ENCODE measurements at regions of chr12 and their contacts with region 1.

Region 1: GRCh38 chr12:14257734-14258574 is 107.5 kb upstream of the ATF7IP start:
- DNase-seq: peak in 3 of 4 donors; percentile 95 to 96 (median 95)
- ATAC-seq: peak; percentile 75
- H3K4me3 ChIP-seq: no peak overlapping the region
- H3K27ac ChIP-seq: peak overlapping the region; percentile 92 to 98
- H3K4me1 ChIP-seq: peaks cover 18 to 73% of the 10 kb centered on the region in 2 donors
- H3K27me3 ChIP-seq: no peaks in the 10 kb centered on the region
- CTCF ChIP-seq: no peak

Region 2: DNA sequence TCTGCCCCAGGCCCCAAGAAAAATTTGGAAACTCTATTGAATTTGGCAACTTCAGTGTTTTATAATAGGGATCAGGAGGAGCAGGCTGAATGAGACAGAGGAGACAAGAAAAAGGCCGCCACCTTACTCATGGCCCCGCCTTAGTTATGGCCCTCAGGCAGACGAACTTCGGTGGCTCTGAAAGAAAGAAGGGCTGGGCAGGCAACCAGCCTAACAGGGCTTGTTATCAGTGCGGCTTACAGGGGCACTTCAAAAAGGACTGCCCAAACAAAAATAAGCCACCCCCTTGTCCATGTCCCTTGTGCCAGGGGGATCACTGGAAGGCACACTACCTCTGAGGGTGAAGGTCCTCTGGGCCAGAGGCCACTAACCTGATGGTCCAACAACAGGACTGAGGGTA is 38.8 kb before region 1 on chr12:
- intact Hi-C with region 1: no loop called
- DNase-seq: no peak
- ATAC-seq: no peak
- H3K4me3 ChIP-seq: no peak overlapping the region
- H3K27ac ChIP-seq: no peak overlapping the region
- H3K4me1 ChIP-seq: peaks cover 0 to 9% of the 10 kb centered on the region in 2 donors
- H3K27me3 ChIP-seq: no peaks in the 10 kb centered on the region
- CTCF ChIP-seq: no peak

Region 3: DNA sequence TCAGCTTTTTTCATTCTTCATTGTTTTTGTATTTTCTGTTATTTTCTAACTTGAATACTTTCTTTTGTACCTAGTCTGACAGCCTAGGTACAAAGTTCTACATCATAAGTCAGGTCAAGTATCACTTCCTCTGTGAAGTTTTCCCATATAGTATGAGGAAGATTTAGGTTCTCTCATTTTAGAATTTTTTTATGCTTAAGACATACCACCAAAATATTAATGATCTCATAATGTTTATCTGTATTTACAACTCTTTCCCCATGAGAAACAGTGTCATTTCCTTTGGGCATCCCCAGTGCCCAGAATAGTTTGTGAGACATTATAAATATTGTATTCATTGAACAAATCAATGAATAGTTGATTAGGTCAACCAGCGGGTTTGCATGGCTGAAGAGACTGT is 104.4 kb after region 1 on chr12:
- intact Hi-C with region 1: loop called in 1 of 2 experiments (anchors 5 kb)
- DNase-seq: no peak
- ATAC-seq: no peak
- H3K4me3 ChIP-seq: no peak overlapping the region
- H3K27ac ChIP-seq: no peak overlapping the region
- H3K4me1 ChIP-seq: peaks cover 0 to 10% of the 10 kb centered on the region in 2 donors
- H3K27me3 ChIP-seq: no peaks in the 10 kb centered on the region
- CTCF ChIP-seq: no peak

Region 4: DNA sequence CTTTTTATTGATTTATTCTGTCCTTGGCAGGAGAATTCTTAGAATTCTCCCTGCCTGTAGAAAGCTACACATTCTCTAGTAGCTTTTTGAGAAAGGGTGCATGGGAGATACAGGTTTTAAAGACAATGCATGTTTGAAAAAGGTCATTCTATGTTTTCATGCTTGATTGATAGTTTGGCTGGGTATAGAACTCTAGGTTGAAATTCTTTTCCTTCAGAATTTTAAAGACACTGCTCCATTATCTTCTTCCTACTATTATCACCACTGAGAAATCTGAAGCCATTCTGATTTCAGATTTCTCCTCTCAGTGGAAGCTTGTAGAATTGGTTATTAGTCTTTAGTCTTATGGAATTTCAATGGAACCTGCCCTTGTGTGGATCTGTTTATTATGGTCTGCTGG is 121.6 kb after region 1 on chr12:
- intact Hi-C with region 1: no loop called
- DNase-seq: no peak
- ATAC-seq: no peak
- H3K4me3 ChIP-seq: no peak overlapping the region
- H3K27ac ChIP-seq: no peak overlapping the region
- H3K4me1 ChIP-seq: peaks cover 11 to 17% of the 10 kb centered on the region in 2 donors
- H3K27me3 ChIP-seq: no peaks in the 10 kb centered on the region
- CTCF ChIP-seq: no peak

Region 5: GRCh38 chr12:14613718-14614117 is 355.8 kb after region 1 on chr12:
- intact Hi-C with region 1: no loop called
- DNase-seq: no peak
- ATAC-seq: peak; percentile 35
- H3K4me3 ChIP-seq: no peak overlapping the region
- H3K27ac ChIP-seq: no peak overlapping the region
- H3K4me1 ChIP-seq: peaks cover 0 to 19% of the 10 kb centered on the region in 2 donors
- H3K27me3 ChIP-seq: no peaks in the 10 kb centered on the region
- CTCF ChIP-seq: no peak